B cell (primary cell): ENCODE measurements at regions of chr20 and their contacts with region 1.

Region 1: DNA sequence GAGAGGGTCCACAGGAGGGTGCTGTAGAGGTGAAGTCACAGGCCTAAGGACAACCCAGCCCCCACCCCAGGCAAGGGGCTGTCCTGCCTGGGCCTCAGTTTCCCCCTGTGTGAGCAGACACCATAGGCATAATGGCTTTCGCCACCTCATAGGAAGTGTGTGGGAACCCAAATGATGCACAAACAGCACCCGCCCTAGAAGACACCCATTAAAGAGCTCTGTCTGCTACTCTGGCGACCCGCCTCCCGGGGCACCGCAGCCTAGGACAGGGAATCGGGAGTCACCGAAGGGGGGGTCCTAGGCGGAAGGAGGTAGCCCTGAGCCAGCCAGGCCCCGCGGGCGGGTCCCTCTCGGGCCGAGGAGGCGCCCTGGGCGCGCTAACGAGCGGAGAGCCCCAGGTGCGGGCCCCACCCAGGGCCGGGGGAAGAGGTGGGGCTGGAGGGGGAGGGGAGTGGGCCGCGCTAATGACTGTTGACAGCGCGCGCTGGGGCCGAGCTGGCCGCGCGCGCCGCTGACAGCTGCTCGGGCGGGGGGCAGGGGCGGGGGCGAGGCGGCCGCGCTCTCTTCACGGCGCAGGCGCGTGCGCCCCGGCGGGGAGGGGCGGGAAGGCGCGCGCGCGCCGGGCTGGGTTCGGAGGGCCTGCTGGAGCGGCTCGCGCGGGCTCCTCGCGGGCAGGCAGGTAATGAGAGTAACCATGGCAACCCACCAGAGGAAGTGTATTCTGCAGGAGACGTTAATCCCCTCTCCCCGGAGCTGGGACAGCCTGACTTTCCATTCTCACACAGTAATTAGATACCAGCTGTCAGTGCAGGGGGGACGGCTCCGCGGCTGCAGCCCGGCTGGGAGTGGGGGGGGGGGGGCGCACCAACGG is 48.9 kb downstream of the NOL4L start:
- DNase-seq: peak; percentile 91
- ATAC-seq: peak; percentile 74
- H3K4me3 ChIP-seq: peak overlapping the region in 4 of 5 experiments; percentile 47 to 69 (median 59)
- H3K4me3 Mint-ChIP-seq: peak overlapping the region; percentile 68
- H3K27ac ChIP-seq: peak overlapping the region; percentile 88 to 92
- H3K27ac Mint-ChIP-seq: peak overlapping the region; percentile 86
- H3K4me1 ChIP-seq: peaks cover 58 to 68% of the 10 kb centered on the region in 2 donors
- H3K4me1 Mint-ChIP-seq: peaks cover 62% of the 10 kb centered on the region
- H3K27me3 ChIP-seq: no peaks in the 10 kb centered on the region
- H3K27me3 Mint-ChIP-seq: no peaks in the 10 kb centered on the region
- CTCF ChIP-seq: no peak

Region 2: GRCh38 chr20:32521780-32522525 is 14.2 kb before region 1 on chr20:
- CTCF ChIA-PET with region 1: interaction called, 99 read pairs
- POLR2A ChIA-PET with region 1: interaction called, 6 read pairs
- intact Hi-C with region 1: no loop called
- DNase-seq: peak; percentile 70
- ATAC-seq: peak; percentile 60
- H3K4me3 ChIP-seq: no peak overlapping the region
- H3K4me3 Mint-ChIP-seq: no peak overlapping the region
- H3K27ac ChIP-seq: no peak overlapping the region
- H3K27ac Mint-ChIP-seq: peak overlapping the region; percentile 20
- H3K4me1 ChIP-seq: peaks cover 31 to 32% of the 10 kb centered on the region in 2 donors
- H3K4me1 Mint-ChIP-seq: peaks cover 42% of the 10 kb centered on the region
- H3K27me3 ChIP-seq: no peaks in the 10 kb centered on the region
- H3K27me3 Mint-ChIP-seq: no peaks in the 10 kb centered on the region
- CTCF ChIP-seq: peak; percentile 80

Region 3: GRCh38 chr20:32585011-32585518 is 48.9 kb after region 1 on chr20 and contains the start of gene NOL4L:
- CTCF ChIA-PET with region 1: interaction called, 4 read pairs
- POLR2A ChIA-PET with region 1: interaction called, 3 read pairs
- intact Hi-C with region 1: loop called (anchors 5 kb)
- DNase-seq: peak; percentile 45
- ATAC-seq: peak; percentile 16
- H3K4me3 ChIP-seq: peak within 1 kb of the TSS; percentile 41 to 70 (median 61)
- H3K4me3 Mint-ChIP-seq: peak within 1 kb of the TSS; percentile 87
- H3K27ac ChIP-seq: no peak within 1 kb of the TSS
- H3K27ac Mint-ChIP-seq: peak within 1 kb of the TSS; percentile 85
- H3K4me1 ChIP-seq: peaks cover 29 to 40% of the 10 kb centered on the region in 2 donors
- H3K4me1 Mint-ChIP-seq: peaks cover 30% of the 10 kb centered on the region
- H3K27me3 ChIP-seq: peaks cover 0 to 10% (median 5%) of the 10 kb centered on the region in 4 experiments
- H3K27me3 Mint-ChIP-seq: peaks cover 4% of the 10 kb centered on the region
- CTCF ChIP-seq: no peak
- total RNA-seq, gene NOL4L: 6.5 and 7.6 TPM in 2 replicates

Region 4: DNA sequence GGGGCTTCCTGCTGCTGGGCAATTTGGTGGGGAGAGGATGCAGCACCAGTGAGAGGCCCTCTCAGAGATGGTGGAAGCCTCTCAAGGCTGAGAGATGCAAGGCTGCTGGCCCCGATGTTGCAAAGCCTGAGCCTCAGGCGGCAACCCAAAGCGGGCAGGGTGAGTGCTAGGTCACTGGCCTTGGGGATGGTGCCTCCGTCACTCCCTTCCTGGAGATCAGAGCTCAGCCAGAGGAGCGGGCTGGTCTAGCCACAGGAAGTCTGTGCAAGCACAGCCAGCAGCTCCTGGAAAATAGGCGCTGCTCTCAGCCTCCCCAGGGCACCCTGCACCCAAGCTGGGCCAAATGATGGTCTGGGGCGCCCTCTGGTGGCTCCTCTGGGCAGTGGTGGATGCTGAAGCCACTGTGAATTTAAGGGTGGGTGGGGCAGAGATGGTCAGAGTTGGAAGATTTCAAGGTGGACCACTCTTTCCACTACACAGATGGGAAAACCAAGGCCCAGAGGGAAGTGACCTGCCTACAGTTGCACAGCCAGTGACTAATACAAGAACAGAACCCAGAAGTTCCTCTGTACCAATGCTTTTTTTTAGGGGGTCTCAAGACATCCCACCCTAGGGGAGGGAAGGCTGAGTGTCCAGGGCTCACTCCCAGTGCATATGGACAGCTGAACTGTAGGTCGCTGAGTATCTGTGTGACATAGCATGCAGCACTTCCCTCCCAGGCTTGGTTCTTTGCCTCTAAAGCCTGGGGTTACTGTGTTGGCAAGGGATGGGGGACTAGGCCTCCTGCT is 116.7 kb after region 1 on chr20:
- CTCF ChIA-PET with region 1: interaction called, 19 read pairs
- POLR2A ChIA-PET with region 1: interaction called, 3 read pairs
- intact Hi-C with region 1: loop called (anchors 1 kb)
- DNase-seq: peak; percentile 84
- ATAC-seq: peak; percentile 96
- H3K4me3 ChIP-seq: no peak overlapping the region
- H3K4me3 Mint-ChIP-seq: no peak overlapping the region
- H3K27ac ChIP-seq: no peak overlapping the region
- H3K27ac Mint-ChIP-seq: no peak overlapping the region
- H3K4me1 ChIP-seq: peaks cover 4 to 7% of the 10 kb centered on the region in 2 donors
- H3K4me1 Mint-ChIP-seq: peaks cover 9% of the 10 kb centered on the region
- H3K27me3 ChIP-seq: peaks cover 0 to 4% (median 0%) of the 10 kb centered on the region in 4 experiments
- H3K27me3 Mint-ChIP-seq: peaks cover 5% of the 10 kb centered on the region
- CTCF ChIP-seq: peak; percentile 97